ENCODE measurements at regions of chr17 and their contacts with region 1.

Region 1: DNA sequence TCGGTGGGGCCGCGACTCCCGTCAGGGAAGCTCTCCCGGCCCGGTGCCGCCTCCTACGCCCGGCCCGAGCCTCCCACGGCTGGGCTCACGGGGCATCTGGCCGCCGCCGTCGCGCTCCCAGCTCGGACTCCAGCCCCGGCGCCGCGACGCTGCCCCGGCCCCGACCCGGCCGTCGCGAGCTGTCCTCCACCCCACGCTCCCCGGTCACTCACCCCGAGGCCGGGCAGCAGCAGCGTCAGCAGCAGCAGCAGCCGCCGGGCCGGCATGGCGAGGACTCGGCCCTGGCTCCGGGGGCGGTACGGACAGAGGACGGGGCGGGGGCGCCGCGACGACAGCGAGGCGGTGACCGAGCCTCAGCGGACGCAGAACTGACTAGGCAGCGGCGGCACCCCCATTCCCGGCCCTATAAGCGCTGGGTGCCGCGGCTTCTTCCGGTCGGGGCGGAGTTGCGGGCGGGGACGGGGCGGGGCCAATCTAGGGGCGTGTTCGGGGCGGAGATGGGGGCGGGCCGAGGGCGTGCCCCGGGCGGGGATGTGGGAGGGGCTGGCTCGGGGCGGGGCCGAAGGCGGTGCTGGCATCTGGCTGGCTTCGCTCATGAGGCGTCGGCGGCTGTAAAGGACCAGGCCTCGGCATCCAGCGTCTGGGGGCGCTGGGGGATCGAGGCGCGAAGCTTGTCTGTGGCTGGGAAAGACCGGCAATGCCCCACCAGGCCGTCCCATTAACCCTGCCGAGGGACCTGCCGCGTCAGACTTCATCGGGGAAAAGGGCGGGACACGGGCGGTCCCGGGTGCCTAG is at the start of gene ERN1:
- DNase-seq: peak; percentile 98
- total RNA-seq, gene ERN1: 6.9 TPM

Region 2: DNA sequence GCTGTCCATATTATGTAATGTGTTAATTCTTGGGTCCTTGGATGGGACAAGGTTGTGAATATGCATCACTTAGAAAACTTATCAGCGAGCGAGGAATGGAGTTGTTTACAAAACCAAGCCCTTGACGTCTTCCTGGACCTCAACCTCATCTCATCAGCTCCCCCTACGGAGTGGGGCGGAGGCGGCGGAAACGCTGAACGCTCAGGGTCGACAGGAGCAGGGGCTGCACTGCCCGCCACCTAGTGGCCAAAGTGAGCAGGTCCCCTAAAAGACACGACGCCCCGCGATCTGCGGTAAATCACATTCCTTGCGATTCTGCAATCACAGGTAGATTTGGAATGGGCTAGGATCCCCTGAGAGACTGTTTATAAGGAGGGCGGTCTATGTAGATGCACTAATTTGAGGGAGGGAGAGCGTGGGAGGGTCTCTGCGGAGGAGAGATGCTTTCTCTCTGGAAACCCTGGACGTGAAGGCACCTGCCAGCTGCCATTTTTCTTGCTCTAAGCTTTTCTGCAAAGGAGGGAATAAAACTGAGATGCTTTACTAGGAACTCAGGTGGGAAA is 104.1 kb before region 1 on chr17:
- intact Hi-C with region 1: loop called (anchors 1 kb)
- DNase-seq: peak; percentile 86

Region 3: GRCh38 chr17:64051153-64051552 is 78.8 kb before region 1 on chr17:
- intact Hi-C with region 1: no loop called
- DNase-seq: no peak

Region 4: DNA sequence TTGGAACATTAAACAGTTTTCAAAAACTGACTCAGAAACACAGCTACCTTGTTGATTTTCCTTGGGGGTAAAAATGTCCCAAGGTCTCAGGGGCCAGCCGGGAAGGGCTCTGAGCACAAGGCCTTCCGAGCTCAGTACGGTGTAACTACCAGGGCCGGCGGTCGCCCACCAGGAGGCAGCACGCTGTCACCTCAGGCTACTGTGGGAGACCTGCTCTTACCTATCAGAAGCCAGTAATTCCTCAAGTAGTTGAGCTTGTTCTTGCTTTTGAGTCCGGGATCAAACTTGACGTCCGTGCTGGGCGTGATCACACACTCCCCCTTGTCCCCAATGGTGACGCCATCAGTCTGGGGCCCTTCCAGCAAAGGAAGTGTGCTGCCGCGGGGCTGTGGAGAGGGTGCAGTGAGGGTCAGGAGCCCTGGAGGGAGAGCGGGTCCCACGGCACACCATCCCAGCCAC is 66.2 kb before region 1 on chr17:
- intact Hi-C with region 1: loop called (anchors 10 kb)
- DNase-seq: peak; percentile 85